Colonic mucosa (tissue), 4 donors: ENCODE measurements at regions of chr11 and their contacts with region 1.

Region 1: DNA sequence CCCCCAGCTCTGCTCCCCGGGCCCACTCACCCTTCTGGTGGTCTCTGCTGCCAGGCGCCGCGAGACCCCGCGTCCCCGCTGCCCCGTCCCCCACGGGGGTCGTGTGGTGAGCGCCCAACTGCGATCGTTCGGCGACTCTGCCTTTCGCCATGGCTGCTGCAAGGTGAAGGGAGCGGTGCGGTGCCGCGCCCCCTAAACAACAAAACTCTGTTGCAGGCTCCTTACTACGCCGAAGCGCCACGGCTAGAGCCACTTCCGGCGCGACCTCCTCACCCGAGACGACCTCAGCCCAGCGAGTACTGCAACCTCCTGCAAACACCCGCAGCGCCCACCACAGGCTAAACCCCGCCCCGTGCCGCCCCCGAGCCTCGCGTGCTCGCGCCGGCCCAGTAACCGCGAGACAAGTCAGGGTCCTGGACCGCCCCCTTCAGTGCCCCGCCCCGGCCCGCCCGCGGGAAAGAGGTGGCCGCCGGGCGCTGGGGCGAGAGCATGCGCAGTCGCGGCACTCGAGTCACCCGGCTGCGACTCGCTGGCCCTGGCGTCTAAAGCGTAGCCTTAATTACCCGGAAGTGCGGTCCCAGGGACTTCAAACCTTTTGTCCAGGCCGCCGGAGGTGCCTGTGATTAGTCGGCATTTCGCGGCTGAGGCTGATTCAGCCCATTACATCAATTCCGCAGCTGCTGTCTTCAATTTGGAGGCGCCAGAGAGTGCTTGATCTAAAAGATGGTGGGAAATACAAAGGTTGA is at the start of gene TMEM41B:
- DNase-seq: peak; percentile 99
- H3K4me3 ChIP-seq: peak within 1 kb of the TSS; percentile 81
- H3K27ac ChIP-seq: peak within 1 kb of the TSS; percentile 80
- H3K4me1 ChIP-seq: peaks cover 5% of the 10 kb centered on the region
- H3K27me3 ChIP-seq: no peaks in the 10 kb centered on the region
- CTCF ChIP-seq: no peak
- total RNA-seq, gene TMEM41B: 41.7 to 64.5 TPM

Region 2: DNA sequence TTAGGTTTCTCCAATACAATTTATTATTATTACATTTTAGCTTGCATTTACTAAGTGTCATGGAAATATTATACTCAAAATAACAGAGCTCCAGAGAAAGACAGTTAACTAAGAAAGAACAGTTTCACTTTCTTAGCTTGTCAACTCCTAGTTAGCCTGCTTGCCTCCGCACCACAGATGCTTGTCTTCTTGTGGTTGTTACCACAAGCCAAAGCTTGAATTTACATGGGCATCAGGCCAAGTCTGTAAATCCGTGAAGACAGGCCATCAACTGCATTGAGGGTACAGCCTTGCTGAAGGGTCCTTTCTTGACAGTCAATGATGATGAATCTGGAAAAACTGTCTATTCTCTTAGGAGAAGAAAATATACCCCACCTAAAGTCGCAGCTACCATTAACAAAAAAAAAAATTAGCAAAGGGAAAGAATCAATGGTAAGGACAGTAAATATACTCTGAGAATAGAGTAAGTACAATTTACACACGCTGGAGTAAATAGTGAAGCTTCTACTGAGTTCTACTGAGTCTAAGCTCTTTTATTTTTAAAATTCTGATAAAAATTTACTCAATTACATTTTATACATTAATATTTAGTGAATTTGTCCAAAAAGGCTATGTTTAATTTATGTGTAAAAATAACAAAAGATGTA is 33.7 kb before region 1 on chr11:
- intact Hi-C with region 1: no loop called
- DNase-seq: peak; percentile 62
- H3K4me3 ChIP-seq: no peak overlapping the region
- H3K27ac ChIP-seq: no peak overlapping the region
- H3K4me1 ChIP-seq: no peaks in the 10 kb centered on the region
- H3K27me3 ChIP-seq: no peaks in the 10 kb centered on the region
- CTCF ChIP-seq: no peak

Region 3: DNA sequence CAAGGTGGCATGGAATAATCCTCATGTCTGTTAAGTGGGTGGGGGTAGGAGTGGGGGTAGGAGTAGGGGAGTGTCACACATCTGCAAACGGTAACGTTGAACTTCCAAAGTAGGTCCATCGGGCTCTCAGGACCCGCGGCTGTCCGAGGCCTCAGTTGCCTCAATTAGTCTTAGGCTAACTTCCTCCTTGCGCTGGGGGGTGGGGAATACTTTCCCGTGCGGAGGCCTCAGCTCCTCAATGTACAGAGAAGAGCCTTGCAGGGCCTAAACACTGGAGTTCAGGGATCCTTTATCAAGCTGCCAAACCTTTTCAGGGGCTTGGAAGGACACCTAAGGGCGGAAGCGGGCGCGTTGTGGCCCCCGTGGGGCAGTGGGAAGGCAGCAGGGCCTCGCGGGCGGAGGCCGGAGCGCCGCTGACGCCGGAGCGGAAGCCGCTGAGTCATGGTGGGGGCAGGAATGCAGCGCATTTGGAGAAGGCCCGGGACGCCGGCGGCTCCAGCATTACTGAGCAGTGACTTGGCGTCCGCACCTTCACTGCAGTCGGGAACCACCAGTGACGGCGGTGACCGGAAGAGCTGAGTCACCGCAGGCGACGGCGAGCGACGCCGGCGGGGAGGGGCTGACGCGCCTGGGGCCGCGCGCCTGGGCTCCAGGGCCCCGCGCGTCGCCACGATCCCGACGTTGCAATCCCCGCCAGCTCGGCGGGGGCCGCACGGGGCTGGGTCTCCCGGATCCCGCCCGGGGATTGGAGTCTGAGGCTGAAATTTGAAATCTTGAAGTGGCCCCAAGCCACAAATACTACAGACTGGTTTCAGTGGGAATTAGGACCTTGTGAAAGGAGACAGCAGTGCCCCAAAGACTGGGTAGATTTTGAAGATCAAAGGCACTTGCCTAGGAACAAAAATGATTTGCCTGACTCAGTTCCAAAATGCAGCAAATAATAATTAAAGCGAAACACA is 49.8 kb after region 1 on chr11:
- intact Hi-C with region 1: loop called (anchors 10 kb)
- DNase-seq: peak; percentile 92
- H3K4me3 ChIP-seq: peak overlapping the region; percentile 39
- H3K27ac ChIP-seq: peak overlapping the region; percentile 92
- H3K4me1 ChIP-seq: peaks cover 3% of the 10 kb centered on the region
- H3K27me3 ChIP-seq: no peaks in the 10 kb centered on the region
- CTCF ChIP-seq: no peak

Region 4: GRCh38 chr11:9858822-9859221 is 544.4 kb after region 1 on chr11:
- intact Hi-C with region 1: no loop called
- DNase-seq: no peak
- H3K4me3 ChIP-seq: no peak overlapping the region
- H3K27ac ChIP-seq: no peak overlapping the region
- H3K4me1 ChIP-seq: peaks cover 6% of the 10 kb centered on the region
- H3K27me3 ChIP-seq: no peaks in the 10 kb centered on the region
- CTCF ChIP-seq: no peak